Activated CD4-positive, alpha-beta memory T cell treated with anti-CD3 and anti-CD28 coated beads, Interleukin-2, amount 10 ng/mL, durations not matched to agents 7 days and 5 days (primary cell): ENCODE measurements at regions of chr5 and their contacts with region 1.

Region 1: DNA sequence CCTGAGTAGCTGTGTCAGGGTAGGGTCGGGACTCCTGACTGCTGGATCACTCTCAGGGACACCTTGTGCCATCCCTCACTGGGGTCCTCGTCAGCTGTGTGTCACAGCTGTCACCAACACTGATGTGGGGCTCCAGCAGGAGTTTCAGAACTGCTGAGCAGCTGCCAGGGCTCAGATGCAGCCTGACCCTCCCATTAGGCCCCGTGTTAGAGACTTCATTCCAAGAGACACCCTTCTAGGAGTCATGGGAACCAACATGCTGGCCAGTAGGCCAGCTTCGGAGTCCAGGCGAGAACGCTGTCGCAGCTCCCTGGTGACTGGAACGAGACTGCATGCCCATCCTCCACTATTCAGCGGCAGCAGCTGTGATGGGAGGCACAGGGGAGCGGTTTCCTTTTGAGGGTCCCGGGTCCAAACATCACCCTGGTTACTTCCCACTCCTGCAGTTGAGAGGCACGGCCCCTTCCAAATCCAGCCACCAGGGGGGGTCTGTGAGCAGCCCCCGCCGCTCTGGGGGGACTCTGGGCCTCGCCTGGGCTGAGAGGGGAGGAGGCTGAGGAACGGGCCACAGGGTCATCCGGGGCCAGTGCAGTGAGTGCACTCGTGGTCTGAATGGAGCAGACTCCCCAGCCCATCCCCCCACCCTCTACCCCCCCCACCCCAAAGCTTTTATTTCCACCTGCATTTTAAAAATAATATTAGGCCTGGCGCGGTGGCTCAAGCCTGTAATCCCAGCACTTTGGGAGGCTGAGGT is 12.6 kb upstream of the TCF7 start:
- DNase-seq: peak; percentile 72
- H3K4me3 Mint-ChIP-seq: no peak overlapping the region
- H3K27ac Mint-ChIP-seq: no peak overlapping the region
- H3K4me1 Mint-ChIP-seq: peaks cover 47% of the 10 kb centered on the region
- H3K27me3 Mint-ChIP-seq: peaks cover 66% of the 10 kb centered on the region

Region 2: GRCh38 chr5:134086943-134087305 is 14.9 kb before region 1 on chr5:
- CTCF ChIA-PET with region 1: interaction called, 11 read pairs
- POLR2A ChIA-PET with region 1: interaction called, 4 read pairs
- DNase-seq: peak; percentile 46
- H3K4me3 Mint-ChIP-seq: no peak overlapping the region
- H3K27ac Mint-ChIP-seq: peak overlapping the region; percentile 49
- H3K4me1 Mint-ChIP-seq: peaks cover 23% of the 10 kb centered on the region
- H3K27me3 Mint-ChIP-seq: peaks cover 55% of the 10 kb centered on the region

Region 3: GRCh38 chr5:134113902-134114875 is 12.3 kb after region 1 on chr5 and contains the start of gene TCF7:
- CTCF ChIA-PET with region 1: interaction called, 74 read pairs
- POLR2A ChIA-PET with region 1: interaction called, 13 read pairs
- DNase-seq: peak; percentile 76
- H3K4me3 Mint-ChIP-seq: peak within 1 kb of the TSS; percentile 78
- H3K27ac Mint-ChIP-seq: no peak within 1 kb of the TSS
- H3K4me1 Mint-ChIP-seq: peaks cover 57% of the 10 kb centered on the region
- H3K27me3 Mint-ChIP-seq: peaks cover 67% of the 10 kb centered on the region
- total RNA-seq, gene TCF7: 19.2 to 21.9 TPM

Region 4: DNA sequence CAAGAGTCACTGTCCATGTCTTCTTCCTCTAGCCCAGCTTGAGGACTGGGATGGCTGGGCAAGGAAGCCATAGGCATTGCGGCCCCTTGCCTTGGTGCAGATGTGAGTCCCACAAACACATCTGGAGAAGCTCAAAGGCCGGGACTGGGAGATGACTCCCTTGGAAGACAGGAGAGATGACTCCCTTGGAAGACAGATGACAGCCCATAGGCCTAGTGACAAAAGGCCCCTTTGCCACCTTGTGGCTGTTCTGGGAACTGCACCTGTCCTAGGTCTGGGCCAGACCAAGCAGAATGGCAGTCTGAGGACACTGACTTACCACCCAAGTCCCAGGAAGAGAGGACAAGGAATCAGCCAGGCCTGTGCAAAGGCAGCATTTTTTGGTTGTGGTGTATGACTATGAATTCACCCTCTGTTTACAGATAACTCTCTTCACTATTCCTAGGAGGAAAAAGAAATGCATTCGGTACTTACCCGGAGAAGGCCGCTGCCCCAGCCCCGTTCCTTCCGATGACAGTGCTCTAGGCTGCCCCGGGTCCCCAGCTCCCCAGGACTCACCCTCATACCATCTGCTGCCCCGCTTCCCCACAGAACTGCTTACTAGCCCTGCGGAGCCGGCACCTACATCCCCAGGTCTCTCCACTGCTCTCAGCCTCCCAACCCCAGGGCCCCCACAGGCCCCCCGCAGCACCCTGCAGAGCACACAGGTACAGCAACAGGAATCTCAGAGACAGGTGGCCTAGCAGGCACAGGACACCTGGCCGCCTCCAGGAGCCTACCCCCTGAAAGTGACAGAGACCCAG is 44.1 kb after region 1 on chr5:
- CTCF ChIA-PET with region 1: interaction called, 11 read pairs
- POLR2A ChIA-PET with region 1: interaction called, 4 read pairs
- DNase-seq: peak; percentile 83
- H3K4me3 Mint-ChIP-seq: no peak overlapping the region
- H3K27ac Mint-ChIP-seq: no peak overlapping the region
- H3K4me1 Mint-ChIP-seq: peaks cover 5% of the 10 kb centered on the region
- H3K27me3 Mint-ChIP-seq: no peaks in the 10 kb centered on the region